HEK293T (cell line): ENCODE measurements at regions of chr1 and their contacts with region 1.

Region 1: DNA sequence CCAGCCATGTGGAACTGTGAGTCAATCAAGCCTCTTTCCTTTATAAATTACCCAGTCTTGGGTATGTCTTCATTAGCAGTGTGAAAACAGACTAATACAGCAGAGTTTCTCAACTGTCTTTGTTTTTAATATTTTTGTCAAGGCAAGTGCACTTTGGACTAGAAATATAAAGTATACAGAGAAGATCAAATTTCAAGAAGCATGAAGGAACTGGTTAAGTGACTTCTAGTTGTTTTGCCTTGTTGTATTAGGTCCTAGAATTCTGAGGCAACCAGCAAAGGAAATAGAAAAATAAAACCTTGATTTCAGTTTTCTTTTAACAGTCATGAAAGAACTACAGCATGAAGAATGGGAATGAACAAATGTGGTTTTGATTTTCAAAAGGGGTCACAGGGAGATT is 131.1 kb upstream of the PTGFR start:
- DNase-seq: no peak

Region 2: GRCh38 chr1:78333502-78333901 is 26.2 kb before region 1 on chr1:
- CTCF ChIA-PET with region 1: interaction called, 10 read pairs
- POLR2A ChIA-PET with region 1: no interaction called
- DNase-seq: peak; percentile 64